Calu3 (cell line): ENCODE measurements at regions of chr2 and their contacts with region 1.

Region 1: DNA sequence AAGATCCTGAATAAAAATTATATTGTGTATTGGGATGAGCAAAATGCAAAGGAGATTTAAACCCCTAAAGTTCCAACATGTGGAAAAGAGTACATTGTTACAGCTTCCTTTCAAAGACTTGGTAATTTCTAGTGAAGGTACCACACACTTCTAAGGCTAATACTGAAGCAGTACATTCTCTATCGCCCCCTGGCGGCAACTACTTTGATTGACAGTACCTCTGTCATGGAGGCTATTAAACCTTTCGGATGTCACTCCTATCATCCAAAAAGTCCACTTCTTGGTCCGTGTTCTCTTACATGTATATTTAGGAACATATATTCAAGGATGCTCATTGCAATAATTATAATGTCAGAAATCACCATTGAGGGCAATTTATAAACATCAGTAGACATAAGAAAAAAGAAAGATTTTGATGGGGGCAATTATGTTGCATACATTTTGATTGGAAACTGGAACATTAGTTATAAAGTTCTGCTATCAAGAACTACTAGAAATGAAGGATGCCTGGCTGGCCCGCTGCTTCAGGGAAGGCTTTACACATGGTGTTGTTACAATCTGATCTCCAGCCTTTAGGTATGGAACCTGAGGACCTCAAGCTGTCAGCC is 601.6 kb downstream of the CPS1 start:
- DNase-seq: peak; percentile 80
- H3K4me3 Mint-ChIP-seq: no peak overlapping the region
- H3K27ac Mint-ChIP-seq: no peak overlapping the region
- H3K4me1 Mint-ChIP-seq: peaks cover 13% of the 10 kb centered on the region
- H3K27me3 Mint-ChIP-seq: no peaks in the 10 kb centered on the region
- CTCF ChIP-seq: peak; percentile 84

Region 2: GRCh38 chr2:211396815-211397214 is 238.9 kb after region 1 on chr2:
- CTCF ChIA-PET with region 1: interaction called, 10 read pairs
- intact Hi-C with region 1: no loop called
- DNase-seq: no peak
- H3K4me3 Mint-ChIP-seq: no peak overlapping the region
- H3K27ac Mint-ChIP-seq: no peak overlapping the region
- H3K4me1 Mint-ChIP-seq: peaks cover 43% of the 10 kb centered on the region
- H3K27me3 Mint-ChIP-seq: no peaks in the 10 kb centered on the region
- CTCF ChIP-seq: no peak